ENCODE measurements at regions of chr6 and their contacts with region 1.

Region 1: GRCh38 chr6:118893807-118894424 is at the start of gene ASF1A:
- DNase-seq: peak; percentile 90 to 99 (median 91)
- ATAC-seq: peak; percentile 86
- H3K4me3 ChIP-seq: peak within 1 kb of the TSS; percentile 72
- H3K27ac ChIP-seq: peak within 1 kb of the TSS; percentile 93
- H3K4me1 ChIP-seq: peaks cover 20 to 40% of the 10 kb centered on the region in 2 experiments
- H3K27me3 ChIP-seq: no peaks in the 10 kb centered on the region
- CTCF ChIP-seq: peak; percentile 73 to 86 (median 83)
- EP300 ChIP-seq: peak; percentile 53
- POLR2A ChIP-seq: peak; percentile 90
- RAD21 ChIP-seq: peak in 1 of 2 experiments; percentile 52; a peak in 2 of 4 replicates
- polyA plus RNA-seq, gene ASF1A: 32.1 to 34.8 TPM

Region 2: GRCh38 chr6:118101831-118102230 is 792.1 kb before region 1 on chr6:
- CTCF ChIA-PET with region 1: no interaction called
- POLR2A ChIA-PET with region 1: no interaction called
- in situ Hi-C with region 1: no loop called
- intact Hi-C with region 1: no loop called
- DNase-seq: no peak
- ATAC-seq: no peak
- H3K4me3 ChIP-seq: no peak overlapping the region
- H3K27ac ChIP-seq: no peak overlapping the region
- H3K4me1 ChIP-seq: no peaks in the 10 kb centered on the region
- H3K27me3 ChIP-seq: no peaks in the 10 kb centered on the region
- CTCF ChIP-seq: no peak
- EP300 ChIP-seq: no peak
- POLR2A ChIP-seq: no peak
- RAD21 ChIP-seq: no peak

Region 3: DNA sequence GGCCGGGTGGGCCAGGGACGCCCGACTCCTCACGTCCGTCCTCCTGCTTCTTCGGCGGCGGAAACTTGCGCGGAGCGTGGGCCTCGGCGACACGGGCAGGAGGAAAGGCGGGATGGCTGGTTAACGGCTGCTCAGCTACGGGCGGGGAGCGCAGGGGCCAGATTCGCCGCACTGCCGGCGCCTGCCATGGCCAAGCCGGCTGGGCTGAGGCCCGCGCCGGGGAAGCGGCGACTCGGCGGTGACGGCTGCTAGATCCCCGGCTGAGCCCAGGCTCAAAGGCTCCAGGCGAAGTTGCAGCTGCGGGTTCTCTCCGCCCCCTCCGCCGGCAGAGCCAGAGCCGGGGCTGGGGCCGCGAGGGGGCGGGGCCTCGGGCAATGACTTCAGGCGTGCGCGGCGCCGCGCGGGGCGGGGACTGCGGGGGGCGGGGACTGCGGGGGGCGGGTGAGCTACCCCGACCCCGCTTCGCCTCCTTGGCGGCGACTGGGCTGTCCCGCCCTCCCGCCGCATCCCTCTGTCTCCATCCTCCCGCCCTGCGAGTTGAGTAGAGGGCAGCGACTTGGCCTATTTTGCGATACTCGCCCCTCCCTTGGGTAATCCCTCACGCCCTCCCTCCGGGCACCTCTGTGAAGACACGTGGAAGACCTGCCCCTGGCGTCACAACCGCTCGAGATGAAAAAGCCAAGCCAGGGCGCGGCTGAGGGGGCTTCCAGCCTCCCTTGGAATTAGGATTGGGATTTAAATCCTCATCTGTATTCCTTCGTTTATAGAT is 242.4 kb before region 1 on chr6 and contains the start of gene CEP85L:
- CTCF ChIA-PET with region 1: no interaction called
- POLR2A ChIA-PET with region 1: no interaction called
- in situ Hi-C with region 1: no loop called
- intact Hi-C with region 1: loop called (anchors 10 kb)
- DNase-seq: peak; percentile 93 to 96 (median 96)
- ATAC-seq: peak; percentile 96
- H3K4me3 ChIP-seq: peak within 1 kb of the TSS; percentile 80
- H3K27ac ChIP-seq: peak within 1 kb of the TSS; percentile 92
- H3K4me1 ChIP-seq: peaks cover 14 to 17% of the 10 kb centered on the region in 2 experiments; a peak in 4 of 5 replicates
- H3K27me3 ChIP-seq: no peaks in the 10 kb centered on the region
- CTCF ChIP-seq: no peak
- EP300 ChIP-seq: no peak
- POLR2A ChIP-seq: peak; percentile 74
- RAD21 ChIP-seq: peak; percentile 2 to 12; a peak in 1 of 4 replicates
- polyA plus RNA-seq, gene CEP85L: 4.5 to 7.0 TPM

Region 4: GRCh38 chr6:118800394-118801071 is 93.4 kb before region 1 on chr6:
- CTCF ChIA-PET with region 1: no interaction called
- POLR2A ChIA-PET with region 1: interaction called, 3 read pairs
- in situ Hi-C with region 1: no loop called
- intact Hi-C with region 1: loop called (anchors 5 kb)
- DNase-seq: peak; percentile 77 to 89 (median 80)
- ATAC-seq: peak; percentile 96
- H3K4me3 ChIP-seq: no peak overlapping the region
- H3K27ac ChIP-seq: no peak overlapping the region
- H3K4me1 ChIP-seq: peaks cover 0 to 3% of the 10 kb centered on the region in 2 experiments; a peak in 3 of 5 replicates
- H3K27me3 ChIP-seq: no peaks in the 10 kb centered on the region
- CTCF ChIP-seq: peak; percentile 74 to 92 (median 83)
- EP300 ChIP-seq: no peak
- POLR2A ChIP-seq: no peak
- RAD21 ChIP-seq: peak; percentile 74 to 88

Region 5: DNA sequence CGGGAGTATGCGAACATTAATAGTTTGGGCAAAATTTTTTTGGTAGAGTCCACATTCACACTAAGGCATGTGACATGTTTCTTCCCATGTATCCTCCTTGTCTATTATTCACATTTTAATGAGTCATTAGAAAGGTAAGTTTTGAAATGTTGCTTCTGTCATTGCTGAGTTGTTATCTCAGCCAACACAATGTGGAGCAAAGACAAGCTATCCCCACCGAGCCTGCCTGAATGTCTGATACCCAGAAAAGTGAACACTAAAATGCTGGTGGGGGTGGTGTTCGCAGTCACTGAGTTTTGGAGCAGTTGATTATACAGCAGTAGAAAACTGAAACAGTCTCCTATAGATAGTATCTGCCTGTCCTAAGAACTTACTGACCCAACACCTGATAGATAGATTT is 68.3 kb before region 1 on chr6:
- CTCF ChIA-PET with region 1: no interaction called
- POLR2A ChIA-PET with region 1: no interaction called
- in situ Hi-C with region 1: no loop called
- intact Hi-C with region 1: no loop called
- DNase-seq: peak in 3 of 4 experiments; percentile 20 to 72 (median 46)
- ATAC-seq: peak; percentile 90
- H3K4me3 ChIP-seq: no peak overlapping the region
- H3K27ac ChIP-seq: no peak overlapping the region; the same call in 1 of the 3 replicates
- H3K4me1 ChIP-seq: peaks cover 0 to 8% of the 10 kb centered on the region in 2 experiments; a peak in 2 of 5 replicates
- H3K27me3 ChIP-seq: no peaks in the 10 kb centered on the region
- CTCF ChIP-seq: no peak
- EP300 ChIP-seq: no peak; the same call in 1 of the 2 replicates
- POLR2A ChIP-seq: no peak
- RAD21 ChIP-seq: no peak

Region 6: GRCh38 chr6:118908441-118908840 is 14.5 kb after region 1 on chr6:
- CTCF ChIA-PET with region 1: no interaction called
- POLR2A ChIA-PET with region 1: interaction called, 14 read pairs
- in situ Hi-C with region 1: no loop called
- intact Hi-C with region 1: no loop called
- DNase-seq: no peak
- ATAC-seq: no peak
- H3K4me3 ChIP-seq: no peak overlapping the region
- H3K27ac ChIP-seq: no peak overlapping the region
- H3K4me1 ChIP-seq: no peaks in the 10 kb centered on the region
- H3K27me3 ChIP-seq: no peaks in the 10 kb centered on the region
- CTCF ChIP-seq: no peak
- EP300 ChIP-seq: no peak
- POLR2A ChIP-seq: 0 out of 2 replicates have a peak, but pooled peaks have one; percentile 21
- RAD21 ChIP-seq: no peak

Region 7: GRCh38 chr6:119078376-119079282 is 184.7 kb after region 1 on chr6 and contains the start of gene FAM184A:
- CTCF ChIA-PET with region 1: no interaction called
- POLR2A ChIA-PET with region 1: interaction called, 3 read pairs
- in situ Hi-C with region 1: no loop called
- intact Hi-C with region 1: loop called (anchors 5 kb)
- DNase-seq: peak; percentile 84 to 87 (median 86)
- ATAC-seq: peak; percentile 91
- H3K4me3 ChIP-seq: peak within 1 kb of the TSS; percentile 74
- H3K27ac ChIP-seq: peak within 1 kb of the TSS; percentile 79
- H3K4me1 ChIP-seq: peaks cover 13 to 15% of the 10 kb centered on the region in 2 experiments; a peak in 3 of 5 replicates
- H3K27me3 ChIP-seq: no peaks in the 10 kb centered on the region
- CTCF ChIP-seq: peak; percentile 58 to 92 (median 70)
- EP300 ChIP-seq: peak; percentile 13; the same call in 1 of the 2 replicates
- POLR2A ChIP-seq: peak; percentile 71
- RAD21 ChIP-seq: peak; percentile 35 to 53
- polyA plus RNA-seq, gene FAM184A: 6.4 to 9.3 TPM